Endothelial cell of umbilical vein (primary cell): ENCODE measurements at regions of chr7 and their contacts with region 1.

Region 1: GRCh38 chr7:124032369-124033094 is at the start of gene TMEM229A:
- DNase-seq: peak; percentile 46
- H3K4me3 ChIP-seq: peak within 1 kb of the TSS in 2 of 3 experiments; percentile 21 to 28
- H3K27ac ChIP-seq: no peak within 1 kb of the TSS
- H3K4me1 ChIP-seq: peaks cover 10% of the 10 kb centered on the region
- H3K27me3 ChIP-seq: peaks cover 36 to 71% of the 10 kb centered on the region in 2 experiments
- CTCF ChIP-seq: no peak
- POLR2A ChIP-seq: no peak
- total RNA-seq, gene TMEM229A: not detected in 2 replicates

Region 2: DNA sequence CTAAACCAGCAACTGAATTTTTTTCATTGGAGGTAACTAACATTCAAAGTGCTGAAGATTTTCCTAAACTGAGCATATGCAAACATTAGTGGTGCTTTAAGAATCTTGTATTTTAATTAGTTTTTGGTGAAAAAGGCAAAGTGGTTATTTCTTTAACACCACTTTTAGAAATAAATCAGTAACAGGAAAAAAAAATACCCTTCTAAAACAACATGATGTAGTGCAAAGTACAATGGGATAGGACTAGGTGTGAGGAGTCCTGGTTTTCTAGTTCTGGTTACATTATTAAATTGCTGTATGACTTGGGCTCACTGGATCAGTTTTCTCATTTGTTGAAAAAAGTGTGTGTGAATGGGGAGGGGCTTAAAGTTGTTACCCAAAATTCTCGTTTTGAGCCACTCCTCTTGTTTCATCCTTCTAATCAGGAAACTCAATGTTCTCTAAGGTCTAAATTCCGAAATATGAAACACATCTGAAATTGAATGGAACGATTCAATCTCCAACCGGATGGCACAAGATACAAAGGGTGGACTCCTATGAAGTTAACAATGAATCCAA is 285.5 kb before region 1 on chr7:
- CTCF ChIA-PET with region 1: no interaction called
- POLR2A ChIA-PET with region 1: no interaction called
- dilution Hi-C with region 1: no loop called
- intact Hi-C with region 1: no loop called
- DNase-seq: no peak
- H3K4me3 ChIP-seq: peak overlapping the region; percentile 93 to 98 (median 98)
- H3K27ac ChIP-seq: peak overlapping the region; percentile 71
- H3K4me1 ChIP-seq: peaks cover 40% of the 10 kb centered on the region
- H3K27me3 ChIP-seq: no peaks in the 10 kb centered on the region
- CTCF ChIP-seq: no peak
- POLR2A ChIP-seq: no peak

Region 3: GRCh38 chr7:124062171-124062570 is 29.6 kb after region 1 on chr7:
- CTCF ChIA-PET with region 1: no interaction called
- POLR2A ChIA-PET with region 1: no interaction called
- dilution Hi-C with region 1: no loop called
- intact Hi-C with region 1: loop called (anchors 1 kb)
- DNase-seq: no peak
- H3K4me3 ChIP-seq: no peak overlapping the region
- H3K27ac ChIP-seq: no peak overlapping the region
- H3K4me1 ChIP-seq: no peaks in the 10 kb centered on the region
- H3K27me3 ChIP-seq: peaks cover 3 to 5% of the 10 kb centered on the region in 2 experiments
- CTCF ChIP-seq: no peak
- POLR2A ChIP-seq: no peak

Region 4: DNA sequence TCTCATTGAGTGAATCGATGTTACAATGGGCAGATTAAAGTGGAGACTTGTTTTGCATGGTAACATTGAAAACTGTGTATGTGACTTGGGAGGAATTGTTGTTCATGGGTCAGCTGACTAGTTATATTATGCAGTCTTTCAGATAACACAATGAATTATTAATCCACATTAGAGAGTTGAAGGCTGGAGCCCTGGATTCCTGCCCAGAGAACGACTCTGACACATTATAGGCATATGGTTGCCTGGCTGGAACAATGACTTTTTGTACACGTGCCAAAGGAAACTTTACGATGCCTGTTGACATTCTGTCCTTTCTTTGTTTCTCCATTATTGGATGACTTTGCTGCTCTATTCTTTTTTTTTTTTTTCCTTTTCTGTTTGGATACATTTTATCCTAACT is 52.6 kb after region 1 on chr7:
- CTCF ChIA-PET with region 1: interaction called, 3 read pairs
- POLR2A ChIA-PET with region 1: no interaction called
- dilution Hi-C with region 1: no loop called
- intact Hi-C with region 1: loop called (anchors 1 kb)
- DNase-seq: peak; percentile 99
- H3K4me3 ChIP-seq: no peak overlapping the region
- H3K27ac ChIP-seq: peak overlapping the region; percentile 38
- H3K4me1 ChIP-seq: peaks cover 23% of the 10 kb centered on the region
- H3K27me3 ChIP-seq: no peaks in the 10 kb centered on the region
- CTCF ChIP-seq: no peak
- POLR2A ChIP-seq: no peak